ENCODE measurements at regions of chr21 and their contacts with region 1.

Region 1: GRCh38 chr21:34202553-34203372 is 129.4 kb downstream of the MRPS6 start:
- DNase-seq: no peak
- H3K4me3 ChIP-seq: peak overlapping the region; percentile 59
- CTCF ChIP-seq: no peak

Region 2: GRCh38 chr21:34129039-34129891 is 73.5 kb before region 1 on chr21:
- CTCF ChIA-PET with region 1: interaction called, 13 read pairs
- POLR2A ChIA-PET with region 1: no interaction called
- DNase-seq: peak; percentile 58
- H3K4me3 ChIP-seq: peak overlapping the region; percentile 29
- CTCF ChIP-seq: peak; percentile 62

Region 3: DNA sequence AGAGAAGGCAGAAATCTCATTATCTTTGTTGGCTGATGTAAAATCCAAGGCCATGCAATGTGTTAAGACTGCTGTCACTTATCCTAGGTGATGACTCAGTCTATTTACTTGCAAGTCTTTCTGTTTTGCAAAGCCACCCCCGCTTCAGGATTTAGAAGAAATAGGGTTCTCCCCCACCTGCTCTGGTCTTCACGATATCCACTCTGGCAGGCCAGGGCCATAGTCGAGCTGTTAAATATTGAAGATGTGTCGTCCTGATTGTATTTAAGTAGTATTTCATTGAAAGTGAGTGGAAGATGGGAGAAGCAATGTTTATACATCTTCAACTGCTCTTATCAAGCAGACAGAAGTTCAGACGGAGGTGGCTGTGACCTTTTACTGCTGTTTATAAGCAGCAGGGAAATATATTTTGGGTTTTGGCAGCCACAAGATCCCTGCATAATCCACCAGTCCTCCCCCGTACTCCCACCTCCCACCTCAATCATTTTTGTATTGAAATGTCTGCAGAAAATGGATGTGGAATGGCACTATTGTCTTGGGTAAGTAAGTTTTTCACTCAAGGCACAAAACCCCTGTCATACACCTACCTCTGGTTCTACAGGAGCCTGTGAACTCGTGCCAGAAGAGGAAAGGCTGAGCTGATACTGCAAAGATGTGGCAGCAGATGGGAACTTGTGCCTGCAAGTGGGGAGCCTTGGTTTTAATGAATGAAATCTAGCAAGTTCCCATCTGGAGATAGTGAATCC is 12.0 kb before region 1 on chr21:
- CTCF ChIA-PET with region 1: interaction called, 14 read pairs
- POLR2A ChIA-PET with region 1: no interaction called
- DNase-seq: no peak
- H3K4me3 ChIP-seq: no peak overlapping the region
- CTCF ChIP-seq: no peak

Region 4: GRCh38 chr21:34215911-34216717 is 13.4 kb after region 1 on chr21:
- CTCF ChIA-PET with region 1: interaction called, 20 read pairs
- POLR2A ChIA-PET with region 1: no interaction called
- DNase-seq: no peak
- H3K4me3 ChIP-seq: no peak overlapping the region
- CTCF ChIP-seq: no peak

Region 5: GRCh38 chr21:34579411-34579810 is 376.6 kb after region 1 on chr21:
- CTCF ChIA-PET with region 1: no interaction called
- POLR2A ChIA-PET with region 1: no interaction called
- DNase-seq: peak; percentile 34
- H3K4me3 ChIP-seq: no peak overlapping the region
- CTCF ChIP-seq: no peak

Measured in AG04449 (cell line).